ENCODE measurements at regions of chr20 and their contacts with region 1.

Region 1: DNA sequence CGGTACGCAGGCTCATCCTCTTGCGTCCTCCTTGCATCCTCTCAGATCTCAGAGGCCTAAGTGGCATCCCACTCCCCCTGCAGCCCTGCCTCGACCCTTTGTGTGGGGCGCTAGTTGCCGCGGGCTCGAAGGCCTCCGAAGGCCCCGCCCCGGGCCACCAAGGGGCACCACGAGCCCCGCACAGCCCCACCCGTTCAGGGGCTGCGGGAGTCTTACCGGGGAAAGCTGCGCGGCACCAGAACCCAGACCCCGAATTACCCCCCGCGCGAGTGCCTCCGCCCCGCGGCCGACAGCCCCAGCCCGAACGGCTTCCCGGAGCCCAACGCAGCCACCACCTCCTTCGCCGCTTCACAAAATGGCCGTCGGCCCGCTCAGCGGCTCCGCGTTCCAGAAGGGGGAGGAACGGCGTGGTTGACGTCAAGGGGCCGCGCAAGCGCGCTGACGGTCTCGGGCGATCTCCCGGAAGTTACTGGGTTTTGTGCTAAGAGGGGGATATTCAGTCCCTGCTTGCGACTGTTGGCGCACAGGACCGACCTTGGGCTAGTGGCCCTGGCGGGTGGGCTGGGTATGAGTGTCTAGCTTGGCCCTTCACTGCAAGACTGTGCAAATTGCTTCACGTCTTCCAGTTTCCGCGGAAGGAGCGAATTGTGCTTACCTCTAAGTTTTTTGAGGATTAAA is at the starts of genes CPNE1 and RBM12:
- DNase-seq: peak; percentile 98
- H3K4me3 Mint-ChIP-seq: peak within 1 kb of the TSS; percentile 91
- H3K27ac Mint-ChIP-seq: peak within 1 kb of the TSS; percentile 99
- H3K4me1 Mint-ChIP-seq: peaks cover 39% of the 10 kb centered on the region
- H3K27me3 Mint-ChIP-seq: no peaks in the 10 kb centered on the region
- total RNA-seq, gene CPNE1: 317 and 318 TPM in 2 replicates
- total RNA-seq, gene RBM12: 148 and 151 TPM in 2 replicates

Region 2: DNA sequence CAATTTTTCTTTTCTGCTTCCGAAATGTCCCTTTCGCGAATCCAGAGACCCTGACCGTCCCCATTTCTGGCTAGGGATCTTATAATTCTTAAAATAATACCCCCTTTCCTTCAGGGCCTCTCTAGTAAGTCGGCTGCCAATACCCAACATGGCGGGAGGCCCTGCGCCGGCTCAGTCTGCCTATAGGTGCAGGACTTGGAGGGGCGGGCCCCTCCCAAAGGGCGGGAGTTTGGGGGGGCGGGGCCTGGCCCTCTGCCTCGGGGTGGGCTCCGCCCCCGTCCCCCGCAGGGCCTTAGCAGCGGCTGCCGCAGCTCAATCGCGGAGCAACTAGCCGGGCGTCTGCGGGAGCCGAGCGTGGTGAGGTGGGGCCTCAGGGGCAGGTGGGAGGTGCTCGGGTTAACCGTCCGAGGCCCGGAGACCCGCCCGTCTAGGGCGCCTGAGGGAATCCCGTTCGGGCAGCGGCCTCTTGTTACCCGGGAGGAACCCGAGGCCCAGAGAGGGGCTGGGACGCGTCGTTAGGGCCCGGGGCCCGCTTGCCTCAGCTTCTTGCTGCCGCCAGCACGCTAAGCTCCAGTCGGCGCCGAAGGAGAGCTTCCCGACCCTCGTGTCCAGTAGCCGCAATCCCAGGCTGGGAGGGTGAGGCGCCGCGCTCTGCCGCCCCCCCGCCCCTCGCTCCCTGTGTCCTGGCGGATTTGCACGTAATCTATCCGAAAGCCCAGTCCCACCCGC is 209.6 kb before region 1 on chr20 and contains the start of gene CEP250:
- intact Hi-C with region 1: loop called (anchors 1 kb)
- DNase-seq: peak; percentile 97
- H3K4me3 Mint-ChIP-seq: peak within 1 kb of the TSS; percentile 92
- H3K27ac Mint-ChIP-seq: peak within 1 kb of the TSS; percentile 98
- H3K4me1 Mint-ChIP-seq: peaks cover 29% of the 10 kb centered on the region
- H3K27me3 Mint-ChIP-seq: no peaks in the 10 kb centered on the region
- total RNA-seq, gene CEP250: 46.8 and 48.8 TPM in 2 replicates

Region 3: DNA sequence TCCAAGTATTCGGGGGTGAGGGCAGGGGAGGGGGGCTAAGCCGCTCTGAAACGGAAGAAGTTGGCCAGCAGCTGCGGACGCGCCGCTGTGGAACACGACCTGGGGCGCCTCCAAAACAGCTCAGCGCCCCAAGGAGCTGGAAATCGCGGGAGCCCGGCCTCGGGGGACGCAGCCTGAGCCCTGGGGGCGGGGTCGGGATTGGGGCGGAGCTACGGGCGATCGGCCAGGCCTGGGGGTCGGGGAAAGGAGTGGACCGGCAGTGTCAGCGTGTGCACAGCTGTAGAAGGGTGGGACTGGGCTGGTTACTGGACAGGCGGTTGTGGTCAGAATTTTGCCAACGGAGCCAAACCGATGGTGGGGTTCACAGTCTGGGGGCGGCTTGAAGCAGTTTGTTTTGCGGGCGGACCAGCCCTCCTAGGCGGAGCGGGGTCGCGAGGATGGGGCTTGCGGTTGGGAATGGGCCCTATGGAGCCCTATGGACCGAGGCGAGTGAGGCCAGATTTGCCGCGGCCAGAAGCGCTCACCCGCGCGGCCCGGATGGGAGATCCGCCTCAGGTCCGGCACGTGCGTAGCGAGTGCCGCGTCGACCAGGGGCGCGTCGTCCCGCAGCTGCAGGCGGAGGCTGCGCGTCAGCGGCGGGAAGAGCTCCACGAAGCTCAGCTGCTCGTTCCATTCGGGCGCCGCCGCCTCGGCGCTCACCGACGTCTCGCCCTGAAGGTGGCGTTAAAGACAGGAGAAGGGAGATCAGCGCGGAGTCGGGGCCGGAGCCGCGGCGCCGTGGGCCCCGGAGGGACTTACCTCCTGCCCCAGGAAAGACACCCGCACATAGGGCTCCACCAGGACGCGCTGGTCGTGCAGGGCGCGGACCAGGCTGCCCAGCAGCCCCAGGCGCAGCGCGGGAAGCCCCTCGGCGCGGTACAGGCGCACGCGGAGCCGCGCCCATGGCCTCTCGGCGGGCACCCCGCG is 63.4 kb before region 1 on chr20:
- intact Hi-C with region 1: loop called (anchors 5 kb)
- DNase-seq: peak; percentile 95
- H3K4me3 Mint-ChIP-seq: peak overlapping the region; percentile 81
- H3K27ac Mint-ChIP-seq: peak overlapping the region; percentile 63
- H3K4me1 Mint-ChIP-seq: peaks cover 9% of the 10 kb centered on the region
- H3K27me3 Mint-ChIP-seq: peaks cover 61% of the 10 kb centered on the region

Region 4: DNA sequence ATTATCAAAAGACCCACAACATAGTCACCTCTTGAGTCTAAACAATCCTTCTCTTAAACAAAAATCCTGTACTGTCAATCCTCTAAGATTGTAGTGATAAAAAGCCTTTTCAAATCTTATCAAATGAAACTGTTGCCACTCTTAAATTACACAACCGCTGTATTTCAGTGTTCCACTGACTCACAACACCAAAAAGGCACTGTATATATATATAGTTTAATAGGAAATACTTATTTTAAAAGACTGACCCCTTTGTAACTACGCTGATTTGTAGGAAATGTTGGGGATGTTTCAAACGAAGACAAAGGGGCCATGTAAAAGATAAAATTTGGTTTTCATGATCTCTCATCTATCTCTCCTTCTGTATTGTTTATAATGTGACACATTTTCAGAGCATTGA is 14.1 kb before region 1 on chr20:
- intact Hi-C with region 1: loop called (anchors 1 kb)
- DNase-seq: no peak
- H3K4me3 Mint-ChIP-seq: no peak overlapping the region
- H3K27ac Mint-ChIP-seq: peak overlapping the region; percentile 11
- H3K4me1 Mint-ChIP-seq: peaks cover 24% of the 10 kb centered on the region
- H3K27me3 Mint-ChIP-seq: no peaks in the 10 kb centered on the region

Region 5: DNA sequence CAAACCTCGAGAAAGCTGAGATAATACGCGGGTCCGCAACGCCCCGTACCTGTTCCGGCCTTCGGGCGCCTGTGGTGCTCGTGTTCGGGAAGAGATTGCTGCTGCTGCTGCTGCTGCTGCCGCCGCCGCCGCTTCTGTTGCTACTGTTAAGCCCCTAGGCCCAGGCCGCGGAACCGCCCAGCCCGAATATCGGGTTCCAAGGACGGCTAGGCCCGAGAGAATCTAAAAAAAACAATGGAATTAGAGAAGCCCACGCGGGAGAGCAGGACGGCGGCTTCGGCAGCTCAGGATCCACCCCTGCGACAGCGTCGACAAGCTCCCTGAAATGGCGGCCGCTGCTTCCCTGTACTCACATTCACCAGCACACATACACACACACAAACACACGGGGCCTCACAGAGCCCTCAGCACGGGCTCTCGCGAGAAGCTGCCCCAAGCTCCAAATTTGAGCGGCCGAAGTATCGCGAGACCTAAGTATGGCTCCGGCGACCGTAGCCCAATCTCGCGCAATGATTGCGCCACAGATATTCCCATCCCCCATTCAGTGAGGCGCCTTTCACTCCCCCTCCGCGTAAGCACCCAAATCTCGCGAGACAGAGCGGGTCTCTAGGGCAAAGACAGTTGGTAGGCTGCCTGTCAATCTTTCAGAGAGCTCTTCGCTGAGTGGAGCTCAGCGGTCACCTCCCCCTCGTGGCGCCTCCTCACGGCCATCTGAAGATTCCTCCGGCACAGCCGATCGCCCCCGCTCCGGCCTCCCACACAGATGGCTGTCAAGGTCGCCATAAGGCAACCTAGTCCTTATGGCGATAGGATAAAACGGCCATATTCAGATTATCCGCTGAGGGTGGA is 77.4 kb after region 1 on chr20 and contains the start of gene RBM39:
- intact Hi-C with region 1: loop called (anchors 1 kb)
- DNase-seq: peak; percentile 100
- H3K4me3 Mint-ChIP-seq: peak within 1 kb of the TSS; percentile 91
- H3K27ac Mint-ChIP-seq: peak within 1 kb of the TSS; percentile 100
- H3K4me1 Mint-ChIP-seq: peaks cover 43% of the 10 kb centered on the region
- H3K27me3 Mint-ChIP-seq: peaks cover 4% of the 10 kb centered on the region
- total RNA-seq, gene RBM39: 352 and 354 TPM in 2 replicates

Region 6: GRCh38 chr20:36085686-36086267 is 421.1 kb after region 1 on chr20:
- intact Hi-C with region 1: no loop called
- DNase-seq: no peak
- H3K4me3 Mint-ChIP-seq: no peak overlapping the region
- H3K27ac Mint-ChIP-seq: no peak overlapping the region
- H3K4me1 Mint-ChIP-seq: no peaks in the 10 kb centered on the region
- H3K27me3 Mint-ChIP-seq: peaks cover 28% of the 10 kb centered on the region

Measured in activated CD4-positive, alpha-beta T cell treated with anti-CD3 and anti-CD28 coated beads, Interleukin-2, amount 10 ng/mL, durations not matched to agents 24 days and 14 days (primary cell).